Activated CD4-positive, alpha-beta T cell treated with anti-CD3 and anti-CD28 coated beads, Interleukin-2, amount 10 ng/mL, durations not matched to agents 24 days and 14 days (primary cell): ENCODE measurements at regions of chr13 and their contacts with region 1.

Region 1: GRCh38 chr13:49443704-49444523 is at the starts of genes CAB39L and SETDB2:
- DNase-seq: peak; percentile 100
- H3K4me3 Mint-ChIP-seq: peak within 1 kb of the TSS; percentile 95
- H3K27ac Mint-ChIP-seq: peak within 1 kb of the TSS; percentile 98
- H3K4me1 Mint-ChIP-seq: peaks cover 44% of the 10 kb centered on the region
- H3K27me3 Mint-ChIP-seq: peaks cover 2% of the 10 kb centered on the region
- total RNA-seq, gene CAB39L: 5.7 and 6.8 TPM in 2 replicates
- total RNA-seq, gene SETDB2: 13.4 and 14.5 TPM in 2 replicates

Region 2: DNA sequence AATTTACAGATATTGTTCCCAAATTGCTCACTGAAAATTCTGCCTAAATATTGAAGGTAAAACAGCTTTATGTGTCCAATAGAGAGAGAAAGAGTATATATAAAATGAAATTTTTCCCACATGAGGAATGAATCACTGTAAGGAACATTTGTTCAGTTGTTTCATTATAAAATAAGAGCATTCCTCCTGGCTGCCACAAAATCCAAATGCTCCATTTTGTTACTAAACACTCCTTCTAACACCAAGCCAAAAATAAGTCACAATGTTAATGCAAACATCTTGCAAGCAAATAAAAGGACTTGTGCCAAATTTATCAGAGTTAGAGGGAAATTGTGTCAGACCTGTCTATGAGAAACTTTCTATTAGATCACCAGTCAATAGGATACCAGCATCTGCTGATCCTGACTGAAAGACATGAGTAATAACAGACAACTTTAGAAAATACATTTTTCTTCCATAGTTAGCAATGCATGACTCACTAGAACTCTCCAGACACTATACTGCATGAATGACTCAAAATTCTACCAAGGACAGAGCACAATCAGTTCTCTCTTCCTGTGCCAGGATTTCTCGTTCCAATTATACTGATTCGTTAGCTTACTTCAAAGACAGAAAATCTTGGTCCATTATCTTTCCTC is 551.7 kb before region 1 on chr13:
- intact Hi-C with region 1: loop called (anchors 10 kb)
- DNase-seq: no peak
- H3K4me3 Mint-ChIP-seq: peak overlapping the region; percentile 20
- H3K27ac Mint-ChIP-seq: peak overlapping the region; percentile 70
- H3K4me1 Mint-ChIP-seq: peaks cover 19% of the 10 kb centered on the region
- H3K27me3 Mint-ChIP-seq: no peaks in the 10 kb centered on the region

Region 3: DNA sequence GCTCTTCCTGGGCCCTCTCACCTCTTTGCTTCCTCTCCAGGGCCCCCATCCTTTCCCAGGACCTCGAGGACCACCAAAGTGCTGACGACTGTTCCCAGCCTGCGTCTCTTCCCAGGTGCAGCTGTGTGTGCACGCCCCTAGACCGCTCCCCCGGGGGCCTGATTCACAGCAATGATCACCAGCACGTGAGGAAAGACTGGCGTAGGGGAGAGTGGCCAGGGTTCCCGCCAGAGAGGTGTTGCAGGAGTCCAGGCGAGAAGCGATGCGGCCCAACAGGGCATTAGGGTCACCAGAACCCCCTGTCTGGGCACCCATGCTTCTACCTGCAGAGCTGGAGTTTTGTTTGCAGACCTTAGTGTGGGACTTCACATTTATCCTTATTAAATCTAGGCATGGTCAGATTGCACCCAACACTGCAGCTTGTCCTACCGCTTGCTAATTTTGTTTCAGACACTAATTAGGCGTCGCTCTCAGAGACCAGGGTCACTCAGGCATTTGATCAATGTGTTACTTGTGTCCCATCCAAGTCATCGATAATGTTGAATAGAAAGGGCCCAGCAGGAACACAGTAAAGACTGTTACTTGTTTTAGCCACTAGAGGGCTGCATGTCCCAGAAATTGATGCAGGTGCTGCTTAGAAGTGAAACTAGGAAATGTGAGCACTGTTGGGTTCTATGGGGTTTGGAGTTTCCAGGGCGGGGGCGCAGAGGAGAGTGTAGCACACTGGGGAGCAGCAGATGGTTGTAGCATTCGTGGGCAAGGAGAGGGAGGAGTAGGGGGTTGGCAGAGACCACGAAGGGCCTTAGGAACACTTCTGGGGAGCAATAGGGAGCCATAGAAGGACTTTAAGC is 142.9 kb before region 1 on chr13:
- intact Hi-C with region 1: loop called (anchors 2 kb)
- DNase-seq: peak; percentile 91
- H3K4me3 Mint-ChIP-seq: peak overlapping the region; percentile 47
- H3K27ac Mint-ChIP-seq: peak overlapping the region; percentile 21
- H3K4me1 Mint-ChIP-seq: peaks cover 12% of the 10 kb centered on the region
- H3K27me3 Mint-ChIP-seq: no peaks in the 10 kb centered on the region

Region 4: DNA sequence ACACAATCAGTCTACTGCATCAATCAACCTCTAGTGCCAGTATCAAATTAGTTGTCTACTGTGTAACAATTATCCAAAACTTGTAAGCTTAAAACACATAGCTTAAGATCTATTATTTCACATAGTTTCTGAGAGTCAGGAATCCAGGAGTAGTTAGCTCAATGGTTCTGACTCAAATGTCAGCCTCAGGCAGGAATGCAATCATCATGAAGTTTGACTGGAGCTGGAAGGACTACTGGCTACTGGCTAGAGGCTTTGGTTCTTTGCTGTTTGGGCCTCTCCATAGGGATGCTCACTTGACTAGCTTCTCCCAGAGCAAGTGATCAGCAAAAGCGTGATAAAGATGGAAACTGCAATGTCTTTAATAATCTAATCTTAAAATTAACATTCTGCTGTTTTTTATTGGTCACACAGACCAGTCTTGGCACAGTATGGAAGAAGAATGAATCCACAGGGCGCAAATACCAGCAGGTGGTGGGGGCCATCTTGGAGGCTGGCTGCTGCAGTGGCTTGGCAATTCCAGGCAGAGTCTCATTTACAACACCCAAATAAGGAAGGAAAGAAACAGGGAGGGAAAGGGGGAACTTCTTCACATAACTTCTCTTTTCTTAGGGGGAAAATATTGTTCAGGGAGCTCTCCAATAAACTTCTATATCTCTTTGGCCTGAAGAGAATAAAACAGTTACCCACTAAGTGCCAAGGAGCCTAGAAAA is 15.7 kb before region 1 on chr13:
- intact Hi-C with region 1: no loop called
- DNase-seq: no peak
- H3K4me3 Mint-ChIP-seq: no peak overlapping the region
- H3K27ac Mint-ChIP-seq: no peak overlapping the region
- H3K4me1 Mint-ChIP-seq: no peaks in the 10 kb centered on the region
- H3K27me3 Mint-ChIP-seq: no peaks in the 10 kb centered on the region

Region 5: DNA sequence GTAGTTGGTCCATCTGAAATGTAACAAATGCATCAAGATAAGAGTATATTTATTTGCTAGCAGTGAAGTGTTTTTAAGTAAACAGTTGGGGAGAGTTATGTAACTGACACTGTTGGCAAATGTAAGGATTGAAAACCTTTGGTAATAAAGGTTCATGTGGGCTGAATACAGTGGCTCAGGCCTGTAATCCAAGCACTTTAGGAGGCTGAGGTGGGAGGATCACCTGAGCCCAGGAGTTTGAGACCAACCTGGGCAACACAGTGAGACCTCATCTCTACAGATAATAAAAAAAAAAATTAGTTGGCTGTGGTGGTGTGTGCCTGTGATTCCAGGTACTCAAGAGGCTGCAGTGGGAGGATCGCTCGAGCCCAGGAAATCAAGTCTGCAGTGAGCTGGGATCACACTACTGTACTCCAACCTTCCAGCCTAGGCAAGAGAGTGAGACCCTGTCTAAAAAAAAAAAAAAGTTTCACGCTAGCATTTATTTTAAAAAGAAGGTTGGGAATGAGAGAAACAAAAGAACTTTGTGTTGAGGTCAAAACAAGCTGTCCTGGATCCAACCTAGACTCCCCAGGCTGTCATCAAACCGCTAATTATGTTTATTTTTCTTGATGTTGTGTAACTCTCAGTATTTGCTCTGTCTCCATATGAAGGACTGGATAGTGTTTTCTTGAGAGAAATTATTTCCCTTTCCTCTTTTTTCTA is 20.9 kb after region 1 on chr13:
- intact Hi-C with region 1: no loop called
- DNase-seq: no peak
- H3K4me3 Mint-ChIP-seq: no peak overlapping the region
- H3K27ac Mint-ChIP-seq: no peak overlapping the region
- H3K4me1 Mint-ChIP-seq: no peaks in the 10 kb centered on the region
- H3K27me3 Mint-ChIP-seq: no peaks in the 10 kb centered on the region

Region 6: DNA sequence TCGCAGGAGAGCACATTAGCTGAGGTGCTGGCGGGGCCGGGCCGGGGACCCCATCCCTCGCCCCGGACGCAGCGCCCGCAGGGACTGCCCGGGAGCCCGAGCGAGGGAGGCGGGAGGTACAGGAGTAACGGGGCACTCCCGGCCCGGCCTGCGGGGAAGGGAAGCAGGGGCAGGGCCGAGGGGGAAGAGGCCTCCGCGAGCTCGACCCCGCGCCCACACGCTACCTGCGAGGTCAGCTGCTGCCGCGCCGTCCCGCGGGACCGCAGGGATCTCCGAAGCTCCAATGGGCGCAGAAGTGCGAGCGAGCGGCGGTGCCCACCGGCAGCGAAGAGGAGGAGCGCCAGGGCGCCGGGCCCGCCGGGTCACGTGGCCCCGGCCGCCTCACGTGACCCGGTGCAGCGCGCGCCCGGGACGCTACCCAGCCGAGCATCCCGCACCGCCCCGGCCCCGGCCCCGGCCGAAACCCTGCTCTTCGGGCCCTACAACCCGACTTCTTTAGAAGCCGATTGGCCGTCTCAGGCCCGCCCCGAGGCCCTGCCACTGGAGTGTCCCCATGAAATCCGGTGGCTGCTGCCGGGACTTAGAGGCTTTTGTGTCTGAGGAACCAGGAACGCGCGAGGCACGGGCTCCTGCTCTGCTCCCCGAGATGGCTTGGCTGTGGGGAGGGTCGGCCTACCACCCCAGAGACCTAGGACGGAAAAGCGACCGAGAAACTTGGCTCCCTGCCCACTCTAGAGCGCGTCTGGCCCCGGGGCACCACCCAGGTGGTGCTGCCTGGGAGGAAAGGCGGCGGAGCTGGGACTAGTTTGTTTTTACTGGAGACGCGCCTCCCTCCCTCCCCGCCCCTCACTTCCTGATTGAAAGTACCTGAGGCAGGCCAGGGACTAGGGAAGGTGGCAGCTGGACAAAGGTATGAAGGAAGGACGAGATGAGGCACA is 141.6 kb after region 1 on chr13 and contains the start of gene RCBTB1:
- intact Hi-C with region 1: loop called (anchors 2 kb)
- DNase-seq: peak; percentile 92
- H3K4me3 Mint-ChIP-seq: peak within 1 kb of the TSS; percentile 90
- H3K27ac Mint-ChIP-seq: peak within 1 kb of the TSS; percentile 79
- H3K4me1 Mint-ChIP-seq: peaks cover 29% of the 10 kb centered on the region
- H3K27me3 Mint-ChIP-seq: peaks cover 5% of the 10 kb centered on the region
- total RNA-seq, gene RCBTB1: 14.8 and 16.2 TPM in 2 replicates

Region 7: DNA sequence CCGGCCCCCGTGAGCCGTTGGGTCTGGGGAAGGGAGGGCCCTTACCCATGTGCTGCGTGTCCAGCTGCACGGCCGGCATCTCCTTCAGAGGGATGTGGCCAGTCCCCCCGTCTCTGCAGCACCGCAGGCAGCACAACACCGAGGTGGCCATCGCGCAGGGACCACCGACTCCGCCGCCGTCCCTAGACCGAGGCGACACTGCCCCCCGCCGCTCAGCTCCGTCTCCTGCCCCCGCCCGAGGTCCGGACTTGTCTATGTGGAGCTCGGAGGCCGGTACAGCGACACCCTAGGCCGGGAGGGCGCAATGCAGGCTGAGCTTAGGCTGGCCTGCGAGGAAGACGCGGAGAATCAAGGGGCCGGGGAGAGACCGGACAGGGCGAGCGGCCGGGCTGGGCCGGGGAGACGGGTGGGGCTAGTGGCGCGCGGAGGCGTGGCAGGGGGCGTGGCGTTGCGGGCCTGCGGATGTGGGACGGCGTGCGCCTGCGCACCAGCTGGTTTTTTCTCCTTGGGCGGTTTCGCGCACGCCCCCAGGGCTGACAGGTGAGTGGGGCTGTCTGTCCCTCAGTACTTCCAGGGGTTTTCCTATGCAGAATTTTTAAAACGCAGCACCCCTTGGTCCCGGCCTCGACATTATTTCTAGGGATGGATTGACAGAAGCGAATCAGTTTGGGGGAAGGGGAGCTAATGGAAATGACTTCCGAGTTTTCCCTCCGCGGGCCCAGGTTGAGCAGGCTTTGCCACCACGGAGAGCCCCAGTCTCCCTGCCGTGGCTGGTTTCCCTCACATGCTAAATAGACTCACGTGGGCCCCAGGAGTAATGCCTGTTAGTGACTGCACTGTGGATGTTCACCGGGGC is 492.4 kb after region 1 on chr13 and contains the start of gene SPRYD7:
- intact Hi-C with region 1: loop called (anchors 5 kb)
- DNase-seq: peak; percentile 99
- H3K4me3 Mint-ChIP-seq: peak within 1 kb of the TSS; percentile 94
- H3K27ac Mint-ChIP-seq: peak within 1 kb of the TSS; percentile 83
- H3K4me1 Mint-ChIP-seq: peaks cover 13% of the 10 kb centered on the region
- H3K27me3 Mint-ChIP-seq: peaks cover 17% of the 10 kb centered on the region
- total RNA-seq, gene SPRYD7: 6.9 and 8.1 TPM in 2 replicates